GM10248 (cell line): ENCODE measurements at regions of chr17 and their contacts with region 1.

Region 1: DNA sequence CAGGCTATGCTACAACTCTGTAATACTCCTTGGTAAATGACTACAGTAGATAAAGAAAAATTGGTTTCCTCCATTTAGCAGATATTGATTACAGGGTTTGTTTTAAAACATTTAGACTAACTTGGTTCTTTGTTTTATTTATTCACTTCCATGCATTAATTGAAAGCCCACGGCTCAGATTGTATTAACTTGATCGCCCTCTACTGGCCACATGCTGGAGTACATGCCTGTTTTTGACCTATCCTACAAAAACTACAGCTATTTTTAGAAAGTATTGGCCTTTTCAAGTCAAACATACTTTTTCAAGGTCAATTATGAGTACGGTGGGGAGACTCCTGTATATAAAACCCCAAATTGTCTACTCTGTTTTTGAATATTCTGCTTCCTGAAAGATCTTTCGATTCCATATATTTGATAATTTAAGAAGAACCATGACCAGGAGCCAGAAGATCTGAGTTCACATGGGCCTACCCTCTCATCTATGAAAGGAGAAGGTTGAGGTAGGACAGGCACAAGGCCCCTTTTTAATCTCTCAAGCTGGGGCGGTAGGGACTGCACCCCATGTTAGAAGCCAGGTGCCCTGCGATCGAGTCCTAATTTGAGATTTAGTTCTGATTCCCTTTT is 51.8 kb downstream of the CA10 start:
- DNase-seq: peak; percentile 42
- CTCF ChIP-seq: peak; percentile 69

Region 2: DNA sequence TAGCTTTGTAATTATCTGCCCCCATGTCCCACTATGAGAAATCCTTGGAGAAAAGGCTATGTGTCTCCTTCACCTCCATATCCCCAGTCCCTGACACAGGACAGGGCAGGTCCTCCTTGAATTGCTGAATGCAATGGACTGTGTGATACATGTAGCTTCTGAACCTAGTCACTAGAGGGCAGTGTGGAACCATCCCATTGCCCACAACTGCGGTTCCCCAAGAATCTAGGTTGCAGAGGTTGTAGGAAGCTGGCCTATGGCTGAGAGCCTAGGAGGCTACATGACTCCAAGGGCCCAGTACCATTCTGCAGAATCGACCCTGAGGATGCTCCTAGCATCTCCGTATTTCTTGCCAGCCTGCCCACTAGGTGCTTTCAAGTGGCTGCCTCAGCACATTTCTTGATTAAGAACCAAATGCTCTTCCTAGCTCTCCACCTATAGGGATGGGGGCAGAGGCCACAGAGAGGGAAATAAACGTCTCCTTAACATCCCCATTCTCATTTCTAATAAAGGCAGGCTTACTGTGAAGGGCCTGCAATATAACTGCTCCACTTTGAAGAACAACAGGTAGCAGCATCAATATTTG is 342.3 kb before region 1 on chr17:
- CTCF ChIA-PET with region 1: interaction called, 17 read pairs
- POLR2A ChIA-PET with region 1: no interaction called
- DNase-seq: peak; percentile 56
- CTCF ChIP-seq: peak; percentile 79

Region 3: GRCh38 chr17:51860954-51861561 is 245.7 kb before region 1 on chr17:
- CTCF ChIA-PET with region 1: interaction called, 12 read pairs
- POLR2A ChIA-PET with region 1: no interaction called
- DNase-seq: peak; percentile 19
- CTCF ChIP-seq: peak; percentile 60

Region 4: DNA sequence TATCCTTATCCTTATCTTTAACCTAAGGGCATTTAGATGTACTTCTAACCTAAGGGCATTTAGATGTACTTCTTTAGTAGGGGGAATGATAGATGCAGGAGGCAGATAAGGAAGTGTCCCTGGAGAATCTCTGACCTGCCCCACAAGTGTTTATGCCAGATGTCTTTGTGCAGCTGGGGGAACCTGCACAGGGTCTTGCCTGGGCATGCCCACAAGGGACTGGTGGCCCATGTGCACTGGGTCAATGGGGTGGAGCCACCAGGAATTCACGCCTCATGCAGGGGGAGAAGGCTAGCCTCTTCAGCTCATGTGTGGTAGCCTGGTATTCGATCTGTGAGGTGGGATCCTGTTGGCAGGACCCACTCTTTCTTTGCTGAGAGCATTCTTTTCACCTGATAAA is 13.7 kb after region 1 on chr17:
- CTCF ChIA-PET with region 1: interaction called, 14 read pairs
- POLR2A ChIA-PET with region 1: no interaction called
- DNase-seq: no peak
- CTCF ChIP-seq: no peak

Region 5: GRCh38 chr17:52170963-52171572 is 64.3 kb after region 1 on chr17:
- CTCF ChIA-PET with region 1: no interaction called
- POLR2A ChIA-PET with region 1: no interaction called
- DNase-seq: no peak
- CTCF ChIP-seq: peak; percentile 15